H1 (cell line): ENCODE measurements at regions of chr3 and their contacts with region 1.

Region 1: DNA sequence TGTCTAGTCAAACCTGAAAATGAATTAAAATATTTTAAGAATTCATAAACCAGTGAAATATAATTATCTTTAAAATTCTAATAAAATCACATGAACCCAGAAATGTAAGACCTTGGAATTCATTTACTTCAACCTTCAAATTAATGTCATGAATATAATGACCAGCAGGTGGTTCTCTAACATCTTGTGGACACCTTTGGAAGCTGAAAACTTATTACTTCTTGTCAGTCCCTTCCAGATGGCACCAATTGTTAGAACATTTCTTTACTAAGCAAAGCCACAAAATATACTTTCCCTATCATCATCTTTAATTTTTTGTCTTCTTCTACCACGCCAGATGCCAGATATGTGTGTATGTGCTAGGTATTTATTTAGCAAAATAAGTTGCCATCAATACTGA is 240.0 kb downstream of the MBNL1 start:
- DNase-seq: no peak
- H3K4me3 ChIP-seq: no peak overlapping the region
- H3K27ac ChIP-seq: no peak overlapping the region
- H3K4me1 ChIP-seq: no peaks in the 10 kb centered on the region
- H3K27me3 ChIP-seq: no peaks in the 10 kb centered on the region
- CTCF ChIP-seq: peak in 1 of 3 experiments; percentile 18; a peak in 2 of 4 replicates
- EP300 ChIP-seq: no peak
- POLR2A ChIP-seq: no peak
- RAD21 ChIP-seq: peak; percentile 36 to 51

Region 2: DNA sequence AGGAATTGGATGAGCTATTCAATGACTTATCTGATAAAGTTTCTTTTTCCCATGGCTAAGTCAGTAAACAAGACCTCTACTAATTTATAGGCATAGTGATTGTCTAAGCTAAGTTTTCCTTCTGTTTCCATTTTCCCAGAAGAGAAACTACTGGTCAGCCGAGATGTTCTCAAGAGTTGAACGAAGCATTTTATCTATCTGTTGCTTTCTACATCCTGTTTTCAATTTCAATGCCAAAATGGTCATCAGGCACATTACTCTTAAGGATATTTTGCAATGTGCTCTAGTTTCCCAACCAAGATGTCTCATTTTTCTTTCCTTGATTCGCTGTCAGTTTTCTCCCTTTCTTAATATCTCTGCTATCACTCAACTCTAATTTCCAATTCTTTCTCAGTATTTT is 11.2 kb before region 1 on chr3:
- CTCF ChIA-PET with region 1: interaction called, 10 read pairs
- POLR2A ChIA-PET with region 1: no interaction called
- DNase-seq: no peak
- H3K4me3 ChIP-seq: no peak overlapping the region
- H3K27ac ChIP-seq: no peak overlapping the region
- H3K4me1 ChIP-seq: peaks cover 0 to 4% (median 2%) of the 10 kb centered on the region in 4 experiments; a peak in 1 of 7 replicates
- H3K27me3 ChIP-seq: no peaks in the 10 kb centered on the region
- CTCF ChIP-seq: no peak
- EP300 ChIP-seq: no peak
- POLR2A ChIP-seq: no peak
- RAD21 ChIP-seq: no peak